PC-3 (cell line): ENCODE measurements at regions of chr4 and their contacts with region 1.

Region 1: DNA sequence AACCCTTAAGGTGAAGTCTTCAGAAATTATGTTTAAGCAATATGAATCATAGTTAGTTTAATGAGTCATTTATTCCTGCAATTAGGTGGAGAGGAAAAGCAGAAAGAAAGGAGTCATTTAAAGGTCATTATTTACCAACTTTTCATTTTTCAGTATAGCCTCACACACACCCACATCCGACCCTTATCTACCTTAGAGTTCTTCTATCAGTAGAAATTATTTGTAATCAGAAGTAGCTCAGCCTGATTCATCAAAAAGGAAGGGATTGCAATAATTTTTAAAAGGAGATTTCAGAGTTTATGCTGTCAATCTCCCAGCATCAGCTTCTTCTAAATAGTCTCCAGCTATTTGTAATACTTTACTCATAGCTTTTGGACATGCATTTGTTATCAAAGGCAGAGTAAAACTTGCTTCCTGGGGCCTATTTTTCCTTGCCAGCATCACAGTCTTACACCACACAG is 6.0 kb downstream of the ANXA10 start:
- DNase-seq: peak; percentile 87
- ATAC-seq: peak; percentile 71
- H3K4me3 ChIP-seq: no peak overlapping the region
- H3K27ac ChIP-seq: peak overlapping the region; percentile 96
- H3K4me1 ChIP-seq: peaks cover 52% of the 10 kb centered on the region
- H3K27me3 ChIP-seq: no peaks in the 10 kb centered on the region
- CTCF ChIP-seq: no peak

Region 2: GRCh38 chr4:168124008-168124641 is 25.8 kb after region 1 on chr4:
- CTCF ChIA-PET with region 1: no interaction called
- POLR2A ChIA-PET with region 1: no interaction called
- intact Hi-C with region 1: loop called (anchors 2 kb)
- DNase-seq: peak; percentile 72
- ATAC-seq: peak; percentile 90
- H3K4me3 ChIP-seq: no peak overlapping the region
- H3K27ac ChIP-seq: peak overlapping the region; percentile 93
- H3K4me1 ChIP-seq: peaks cover 35% of the 10 kb centered on the region
- H3K27me3 ChIP-seq: no peaks in the 10 kb centered on the region
- CTCF ChIP-seq: no peak

Region 3: GRCh38 chr4:168139336-168139735 is 41.0 kb after region 1 on chr4:
- CTCF ChIA-PET with region 1: no interaction called
- POLR2A ChIA-PET with region 1: no interaction called
- intact Hi-C with region 1: loop called (anchors 5 kb)
- DNase-seq: peak; percentile 55
- ATAC-seq: peak; percentile 80
- H3K4me3 ChIP-seq: no peak overlapping the region
- H3K27ac ChIP-seq: peak overlapping the region; percentile 91
- H3K4me1 ChIP-seq: peaks cover 23% of the 10 kb centered on the region
- H3K27me3 ChIP-seq: no peaks in the 10 kb centered on the region
- CTCF ChIP-seq: no peak